CD8-positive, alpha-beta T cell (primary cell): ENCODE measurements at regions of chr12 and their contacts with region 1.

Region 1: GRCh38 chr12:110583137-110584059 is at the start of gene PPTC7:
- DNase-seq: peak; percentile 94 to 98 (median 97)
- ATAC-seq: peak; percentile 94
- H3K4me3 ChIP-seq: peak within 1 kb of the TSS; percentile 77 to 94
- H3K4me3 Mint-ChIP-seq: peak within 1 kb of the TSS; percentile 88
- H3K27ac ChIP-seq: peak within 1 kb of the TSS; percentile 63 to 87
- H3K27ac Mint-ChIP-seq: peak within 1 kb of the TSS; percentile 86
- H3K4me1 ChIP-seq: peaks cover 60% of the 10 kb centered on the region
- H3K4me1 Mint-ChIP-seq: peaks cover 61% of the 10 kb centered on the region
- H3K27me3 ChIP-seq: no peaks in the 10 kb centered on the region
- H3K27me3 Mint-ChIP-seq: no peaks in the 10 kb centered on the region
- CTCF ChIP-seq: no peak
- total RNA-seq, gene PPTC7: 49.6 to 50.4 TPM

Region 2: DNA sequence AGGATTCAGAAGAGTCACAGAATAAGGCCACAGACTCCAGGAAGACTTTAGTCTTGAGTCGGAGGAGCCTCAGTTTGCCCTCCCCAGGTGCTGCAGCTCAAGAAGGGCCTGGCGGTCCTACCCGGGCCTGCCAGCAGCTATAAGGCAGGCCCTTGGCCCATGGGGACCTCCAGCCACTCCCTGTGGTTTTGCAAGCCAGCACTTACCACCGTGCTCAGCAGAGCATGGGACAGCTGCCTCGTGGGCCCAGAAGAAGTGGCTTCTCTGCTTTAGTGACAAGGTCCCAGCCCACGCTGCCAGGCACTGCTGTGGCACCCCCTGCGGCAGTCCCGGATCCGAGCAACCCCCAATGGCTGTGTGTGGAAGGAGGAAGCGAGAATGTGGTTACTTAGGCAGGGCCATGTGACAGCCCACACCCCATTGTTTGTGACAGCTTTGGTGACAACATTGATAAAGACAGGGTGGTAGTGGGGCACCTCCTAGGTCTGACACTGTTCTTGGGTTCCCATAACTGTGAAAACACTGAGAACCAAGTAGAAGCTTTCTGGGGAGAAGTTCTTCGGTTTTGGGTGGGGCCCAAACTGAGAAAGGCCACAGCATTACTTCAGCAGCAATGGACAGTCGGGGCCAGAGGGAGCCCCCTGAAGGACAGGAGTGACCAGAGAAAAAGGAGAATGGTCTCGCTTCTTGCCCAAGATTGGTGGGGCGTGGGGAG is 1949.7 kb before region 1 on chr12 and contains the start of gene SELPLG:
- CTCF ChIA-PET with region 1: no interaction called
- POLR2A ChIA-PET with region 1: no interaction called
- intact Hi-C with region 1: loop called in 1 of 2 experiments (anchors 5 kb)
- DNase-seq: peak; percentile 77 to 97 (median 88)
- ATAC-seq: peak; percentile 60
- H3K4me3 ChIP-seq: peak within 1 kb of the TSS; percentile 71 to 95
- H3K4me3 Mint-ChIP-seq: peak within 1 kb of the TSS; percentile 100
- H3K27ac ChIP-seq: peak within 1 kb of the TSS; percentile 91 to 92
- H3K27ac Mint-ChIP-seq: peak within 1 kb of the TSS; percentile 100
- H3K4me1 ChIP-seq: peaks cover 73% of the 10 kb centered on the region
- H3K4me1 Mint-ChIP-seq: peaks cover 71% of the 10 kb centered on the region
- H3K27me3 ChIP-seq: no peaks in the 10 kb centered on the region
- H3K27me3 Mint-ChIP-seq: no peaks in the 10 kb centered on the region
- CTCF ChIP-seq: peak; percentile 23
- total RNA-seq, gene SELPLG: 30.4 to 32.3 TPM

Region 3: DNA sequence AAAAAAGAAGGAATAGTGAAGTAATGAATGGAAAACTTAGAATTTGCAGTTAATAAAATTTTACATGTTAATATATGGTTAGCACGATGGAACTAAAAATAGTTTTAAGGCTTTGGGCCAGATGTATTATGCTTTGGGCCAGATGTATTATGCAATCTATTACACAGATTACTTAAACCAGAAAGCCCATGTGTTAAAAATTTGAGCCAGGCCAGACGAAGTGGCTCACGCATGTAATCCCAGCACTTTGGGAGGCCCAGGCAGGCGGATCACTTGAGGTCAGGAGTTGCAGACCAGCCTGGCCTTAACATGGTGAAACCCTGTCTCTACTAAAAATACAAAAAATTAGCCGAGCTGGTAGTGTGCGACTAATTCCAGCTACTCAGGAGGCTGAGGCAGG is 442.0 kb before region 1 on chr12:
- CTCF ChIA-PET with region 1: no interaction called
- POLR2A ChIA-PET with region 1: no interaction called
- intact Hi-C with region 1: no loop called
- DNase-seq: no peak
- ATAC-seq: no peak
- H3K4me3 ChIP-seq: no peak overlapping the region
- H3K4me3 Mint-ChIP-seq: no peak overlapping the region
- H3K27ac ChIP-seq: no peak overlapping the region
- H3K27ac Mint-ChIP-seq: no peak overlapping the region
- H3K4me1 ChIP-seq: no peaks in the 10 kb centered on the region
- H3K4me1 Mint-ChIP-seq: no peaks in the 10 kb centered on the region
- H3K27me3 ChIP-seq: no peaks in the 10 kb centered on the region
- H3K27me3 Mint-ChIP-seq: no peaks in the 10 kb centered on the region
- CTCF ChIP-seq: no peak

Region 4: GRCh38 chr12:110403146-110403975 is 180.0 kb before region 1 on chr12 and contains the start of gene ANAPC7:
- CTCF ChIA-PET with region 1: no interaction called
- POLR2A ChIA-PET with region 1: no interaction called
- intact Hi-C with region 1: loop called in 1 of 2 experiments (anchors 5 kb)
- DNase-seq: peak; percentile 69 to 93 (median 87)
- ATAC-seq: peak; percentile 96
- H3K4me3 ChIP-seq: peak within 1 kb of the TSS; percentile 87 to 89
- H3K4me3 Mint-ChIP-seq: peak within 1 kb of the TSS; percentile 100
- H3K27ac ChIP-seq: peak within 1 kb of the TSS; percentile 78 to 96
- H3K27ac Mint-ChIP-seq: peak within 1 kb of the TSS; percentile 98
- H3K4me1 ChIP-seq: peaks cover 20% of the 10 kb centered on the region
- H3K4me1 Mint-ChIP-seq: peaks cover 33% of the 10 kb centered on the region
- H3K27me3 ChIP-seq: no peaks in the 10 kb centered on the region
- H3K27me3 Mint-ChIP-seq: no peaks in the 10 kb centered on the region
- CTCF ChIP-seq: no peak
- total RNA-seq, gene ANAPC7: 22.1 to 23.2 TPM

Region 5: GRCh38 chr12:110501752-110502738 is 81.4 kb before region 1 on chr12 and contains the starts of genes RAD9B and VPS29:
- CTCF ChIA-PET with region 1: no interaction called
- POLR2A ChIA-PET with region 1: interaction called, 5 read pairs
- intact Hi-C with region 1: loop called (anchors 1 to 2 kb)
- DNase-seq: peak; percentile 98 to 100 (median 99)
- ATAC-seq: peak; percentile 92
- H3K4me3 ChIP-seq: peak within 1 kb of the TSS; percentile 73 to 79
- H3K4me3 Mint-ChIP-seq: peak within 1 kb of the TSS; percentile 97
- H3K27ac ChIP-seq: peak within 1 kb of the TSS; percentile 74 to 89
- H3K27ac Mint-ChIP-seq: peak within 1 kb of the TSS; percentile 97
- H3K4me1 ChIP-seq: peaks cover 17% of the 10 kb centered on the region
- H3K4me1 Mint-ChIP-seq: peaks cover 38% of the 10 kb centered on the region
- H3K27me3 ChIP-seq: no peaks in the 10 kb centered on the region
- H3K27me3 Mint-ChIP-seq: no peaks in the 10 kb centered on the region
- CTCF ChIP-seq: no peak
- total RNA-seq, gene RAD9B: 0.57 to 1.5 TPM
- total RNA-seq, gene VPS29: 49.6 to 53.5 TPM

Region 6: DNA sequence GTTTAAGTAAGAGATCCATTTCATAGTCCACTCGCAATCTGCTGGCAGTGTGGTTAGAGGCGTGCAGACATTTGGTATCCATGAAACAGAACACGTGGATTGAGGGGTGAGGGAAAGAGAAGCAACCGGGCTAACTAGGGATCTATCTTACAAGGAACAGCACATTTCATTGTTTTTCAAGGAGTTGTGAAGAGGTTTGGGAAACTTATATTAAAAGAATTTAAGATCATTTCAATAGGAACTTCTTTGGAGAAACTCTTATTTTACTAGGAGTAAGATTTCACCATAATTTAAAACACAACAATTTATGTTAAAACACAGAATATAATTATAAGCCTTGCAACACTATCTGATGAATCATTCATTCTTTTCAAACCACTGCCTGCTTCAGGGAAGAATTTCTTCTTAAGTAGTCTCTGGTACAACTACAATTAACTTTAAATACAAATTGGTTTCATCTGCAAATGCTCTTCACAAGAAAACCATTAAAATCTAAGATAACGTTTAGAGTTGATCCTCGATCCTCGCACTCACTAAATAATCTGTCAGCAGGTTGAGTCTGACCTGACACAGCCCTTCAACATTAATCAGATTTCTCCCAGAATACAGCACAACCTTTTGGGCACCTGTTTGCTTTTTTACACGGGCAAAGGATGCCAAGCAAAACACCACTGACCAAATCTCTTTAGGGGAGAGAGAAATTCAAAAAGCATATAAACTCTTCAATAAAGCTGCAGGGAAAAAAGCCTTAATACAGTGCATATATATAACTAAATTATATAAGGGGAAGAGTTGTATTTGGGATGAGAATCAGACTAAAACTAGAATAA is 27.6 kb before region 1 on chr12:
- CTCF ChIA-PET with region 1: interaction called, 22 read pairs
- POLR2A ChIA-PET with region 1: no interaction called
- intact Hi-C with region 1: loop called (anchors 1 to 2 kb)
- DNase-seq: no peak
- ATAC-seq: no peak
- H3K4me3 ChIP-seq: no peak overlapping the region
- H3K4me3 Mint-ChIP-seq: no peak overlapping the region
- H3K27ac ChIP-seq: no peak overlapping the region
- H3K27ac Mint-ChIP-seq: peak overlapping the region; percentile 24
- H3K4me1 ChIP-seq: peaks cover 24% of the 10 kb centered on the region
- H3K4me1 Mint-ChIP-seq: peaks cover 49% of the 10 kb centered on the region
- H3K27me3 ChIP-seq: no peaks in the 10 kb centered on the region
- H3K27me3 Mint-ChIP-seq: no peaks in the 10 kb centered on the region
- CTCF ChIP-seq: no peak

Region 7: DNA sequence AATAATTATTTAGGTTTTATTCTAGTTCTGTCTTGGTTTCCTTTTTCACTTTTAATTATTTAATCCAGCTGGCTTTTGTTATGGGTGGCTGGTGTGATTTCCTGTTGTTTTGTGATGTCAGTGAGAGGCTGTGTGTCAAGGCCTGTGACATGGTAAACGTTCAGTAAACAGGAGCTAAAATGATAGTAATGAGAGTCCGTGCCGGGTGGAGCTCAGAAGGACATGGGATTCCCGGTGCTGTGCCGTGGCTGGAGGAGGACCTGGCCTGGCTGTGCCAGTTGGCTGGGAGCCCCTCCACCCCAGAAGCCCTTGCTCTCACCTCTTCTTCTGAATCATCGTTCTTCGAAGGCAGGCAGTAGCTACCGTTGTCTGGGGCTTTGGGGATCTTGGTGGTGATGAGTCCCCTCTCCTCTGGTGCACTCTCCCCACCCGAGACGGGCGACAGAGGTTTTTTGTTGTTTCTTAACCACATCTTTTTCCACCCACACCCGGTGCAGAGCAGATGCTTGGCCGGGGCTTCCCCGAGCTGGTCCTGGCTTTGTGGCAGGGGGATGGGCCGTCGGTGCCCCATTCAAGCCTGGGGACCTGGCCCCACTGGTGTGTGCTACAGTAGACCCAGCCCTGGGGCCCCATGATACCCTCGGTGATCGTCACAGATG is 851.4 kb after region 1 on chr12:
- CTCF ChIA-PET with region 1: no interaction called
- POLR2A ChIA-PET with region 1: no interaction called
- intact Hi-C with region 1: loop called in 1 of 2 experiments (anchors 10 kb)
- DNase-seq: peak; percentile 70 to 96 (median 87)
- ATAC-seq: peak; percentile 70
- H3K4me3 ChIP-seq: peak overlapping the region; percentile 34 to 39
- H3K4me3 Mint-ChIP-seq: peak overlapping the region; percentile 82
- H3K27ac ChIP-seq: peak overlapping the region; percentile 91 to 98
- H3K27ac Mint-ChIP-seq: peak overlapping the region; percentile 100
- H3K4me1 ChIP-seq: peaks cover 99% of the 10 kb centered on the region
- H3K4me1 Mint-ChIP-seq: peaks cover 93% of the 10 kb centered on the region
- H3K27me3 ChIP-seq: no peaks in the 10 kb centered on the region
- H3K27me3 Mint-ChIP-seq: no peaks in the 10 kb centered on the region
- CTCF ChIP-seq: no peak